Spleen (tissue), 13 donors: ENCODE measurements at regions of chr22 and their contacts with region 1.

Region 1: GRCh38 chr22:24938741-24939341 is 7.7 kb downstream of the LHFPL7 start:
- DNase-seq: no peak
- H3K4me3 ChIP-seq: no peak overlapping the region
- H3K27ac ChIP-seq: no peak overlapping the region
- H3K4me1 ChIP-seq: no peaks in the 10 kb centered on the region
- H3K27me3 ChIP-seq: peaks cover 0 to 32% (median 0%) of the 10 kb centered on the region in 7 donors
- CTCF ChIP-seq: peak in 10 of 11 experiments; percentile 35 to 80 (median 64)
- POLR2A ChIP-seq: no peak

Region 2: DNA sequence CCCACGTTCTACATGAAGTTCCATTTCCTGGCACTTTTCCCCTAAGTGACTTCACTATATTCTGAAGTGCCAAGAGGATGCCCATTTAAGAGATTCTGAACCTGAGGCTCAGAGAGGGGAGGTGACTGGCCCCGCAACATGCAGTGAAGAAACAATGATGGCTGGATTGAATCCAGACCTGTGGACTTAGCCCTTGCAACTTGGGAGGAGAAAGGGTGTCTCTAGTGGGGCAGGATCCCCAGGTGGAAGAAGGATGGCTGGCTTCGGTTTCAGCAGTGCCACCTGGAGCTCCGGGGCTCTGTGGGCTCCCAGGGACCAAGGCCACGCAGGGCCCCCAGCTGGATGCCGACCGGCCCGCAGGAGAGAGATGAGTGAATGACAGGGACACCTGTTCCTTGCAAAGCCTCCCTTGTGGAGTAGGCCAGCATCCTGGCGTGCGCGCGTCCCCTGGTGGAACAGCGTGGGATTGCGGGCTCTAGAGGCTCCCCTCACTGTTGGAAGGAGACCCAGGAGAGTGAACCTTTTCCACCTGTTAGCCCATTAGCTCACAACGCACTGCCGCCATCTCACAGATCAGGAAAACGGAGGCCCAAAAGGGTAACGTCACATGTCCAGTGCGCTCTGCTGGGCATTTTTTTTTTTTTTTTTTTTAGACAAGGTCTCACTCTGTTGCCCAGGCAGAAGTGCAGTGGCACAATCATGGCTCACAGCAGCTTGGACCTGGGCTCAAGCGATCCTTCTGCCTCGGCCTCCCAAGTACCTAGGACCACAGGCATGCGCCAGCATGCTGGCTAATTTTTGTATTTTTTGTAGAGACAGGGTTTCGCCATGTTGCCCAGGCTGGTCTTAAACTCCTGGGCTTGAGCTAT is 118.4 kb after region 1 on chr22:
- intact Hi-C with region 1: loop called (anchors 5 kb)
- DNase-seq: peak; percentile 87
- H3K4me3 ChIP-seq: no peak overlapping the region
- H3K27ac ChIP-seq: no peak overlapping the region
- H3K4me1 ChIP-seq: peaks cover under 1 to 55% (median 14%) of the 10 kb centered on the region in 6 donors
- H3K27me3 ChIP-seq: no peaks in the 10 kb centered on the region
- CTCF ChIP-seq: peak in 10 of 11 experiments; percentile 36 to 84 (median 69)
- POLR2A ChIP-seq: no peak

Region 3: DNA sequence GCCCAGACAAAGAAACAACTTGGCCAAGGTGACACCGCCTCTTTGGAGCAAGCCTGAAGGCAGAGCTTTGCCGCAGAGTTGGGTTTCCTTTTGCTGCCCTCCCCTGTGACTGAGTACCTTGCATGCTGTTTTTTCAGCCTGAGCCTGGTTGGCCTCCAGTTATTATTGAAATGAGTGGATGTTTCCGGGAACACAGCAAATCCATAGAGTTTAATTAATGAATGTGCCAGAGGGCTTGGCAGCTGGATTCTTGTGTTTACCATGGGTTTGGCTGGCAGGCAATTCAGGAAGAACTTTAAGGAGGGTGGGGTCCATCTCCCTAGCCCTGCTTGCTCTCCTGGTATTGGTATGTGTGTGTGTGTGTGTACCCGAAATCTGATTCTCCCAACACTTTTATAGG is 195.2 kb after region 1 on chr22:
- intact Hi-C with region 1: no loop called
- DNase-seq: no peak
- H3K4me3 ChIP-seq: no peak overlapping the region
- H3K27ac ChIP-seq: no peak overlapping the region
- H3K4me1 ChIP-seq: peaks cover 0 to 26% (median 7%) of the 10 kb centered on the region in 6 donors
- H3K27me3 ChIP-seq: no peaks in the 10 kb centered on the region
- CTCF ChIP-seq: no peak
- POLR2A ChIP-seq: no peak